ENCODE measurements at regions of chr3 and their contacts with region 1.

Region 1: DNA sequence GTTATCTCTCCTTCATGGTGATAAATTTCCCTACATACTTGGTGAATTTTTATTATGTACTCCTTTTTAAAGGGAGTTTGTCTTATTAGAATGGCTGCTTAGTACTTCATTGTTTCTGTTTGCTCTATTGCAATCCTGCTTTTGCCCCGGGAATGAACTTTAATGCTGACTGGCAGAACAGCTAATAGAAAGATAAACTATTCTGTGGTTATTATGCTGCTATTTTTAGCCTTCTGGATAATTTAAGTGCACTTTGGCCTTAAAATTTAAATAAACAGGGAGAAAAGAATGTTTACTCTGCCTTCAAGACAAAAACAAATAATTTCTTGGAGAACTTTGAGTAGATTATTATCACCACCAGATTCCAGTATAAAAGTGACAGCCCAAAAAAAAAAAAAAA is 413.8 kb upstream of the CCDC54 start:
- DNase-seq: no peak
- ATAC-seq: no peak
- H3K4me3 ChIP-seq: no peak overlapping the region
- H3K4me3 Mint-ChIP-seq: no peak overlapping the region
- H3K27ac ChIP-seq: no peak overlapping the region
- H3K27ac Mint-ChIP-seq: no peak overlapping the region
- H3K4me1 ChIP-seq: no peaks in the 10 kb centered on the region
- H3K4me1 Mint-ChIP-seq: no peaks in the 10 kb centered on the region
- H3K27me3 ChIP-seq: no peaks in the 10 kb centered on the region
- H3K27me3 Mint-ChIP-seq: peaks cover 0 to 5% (median 0%) of the 10 kb centered on the region in 5 donors

Region 2: DNA sequence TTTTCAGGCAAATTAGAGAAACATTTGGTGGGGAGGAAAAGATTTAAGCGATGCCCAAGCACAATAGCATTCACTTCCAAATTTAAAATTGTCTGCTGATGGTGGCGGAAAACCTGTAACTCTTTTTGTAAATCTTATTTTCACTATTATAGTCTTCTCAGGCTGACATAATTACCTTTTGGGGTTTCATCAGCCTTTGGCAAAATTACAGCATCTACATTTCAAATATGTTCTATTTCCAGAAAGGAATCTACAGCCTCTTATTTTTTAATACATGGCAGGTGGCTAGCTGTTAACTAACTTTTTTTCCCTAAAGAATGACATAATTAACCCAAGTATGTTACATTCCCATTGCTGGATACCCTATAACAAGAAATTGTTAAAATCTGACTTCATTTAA is 22.3 kb after region 1 on chr3:
- CTCF ChIA-PET with region 1: no interaction called
- POLR2A ChIA-PET with region 1: no interaction called
- intact Hi-C with region 1: loop called in 1 of 2 experiments (anchors 1 kb)
- DNase-seq: no peak
- ATAC-seq: no peak
- H3K4me3 ChIP-seq: no peak overlapping the region
- H3K4me3 Mint-ChIP-seq: no peak overlapping the region
- H3K27ac ChIP-seq: no peak overlapping the region
- H3K27ac Mint-ChIP-seq: no peak overlapping the region
- H3K4me1 ChIP-seq: no peaks in the 10 kb centered on the region
- H3K4me1 Mint-ChIP-seq: no peaks in the 10 kb centered on the region
- H3K27me3 ChIP-seq: no peaks in the 10 kb centered on the region
- H3K27me3 Mint-ChIP-seq: peaks cover 0 to 5% (median 0%) of the 10 kb centered on the region in 5 donors

Region 3: GRCh38 chr3:107206141-107206540 is 242.7 kb after region 1 on chr3:
- CTCF ChIA-PET with region 1: no interaction called
- POLR2A ChIA-PET with region 1: no interaction called
- intact Hi-C with region 1: no loop called
- DNase-seq: peak in 1 of 9 donors; percentile 2
- ATAC-seq: no peak
- H3K4me3 ChIP-seq: no peak overlapping the region
- H3K4me3 Mint-ChIP-seq: no peak overlapping the region
- H3K27ac ChIP-seq: no peak overlapping the region
- H3K27ac Mint-ChIP-seq: no peak overlapping the region
- H3K4me1 ChIP-seq: no peaks in the 10 kb centered on the region
- H3K4me1 Mint-ChIP-seq: no peaks in the 10 kb centered on the region
- H3K27me3 ChIP-seq: peaks cover 0 to 5% of the 10 kb centered on the region in 2 donors
- H3K27me3 Mint-ChIP-seq: peaks cover 3 to 23% (median 13%) of the 10 kb centered on the region in 5 donors

Region 4: DNA sequence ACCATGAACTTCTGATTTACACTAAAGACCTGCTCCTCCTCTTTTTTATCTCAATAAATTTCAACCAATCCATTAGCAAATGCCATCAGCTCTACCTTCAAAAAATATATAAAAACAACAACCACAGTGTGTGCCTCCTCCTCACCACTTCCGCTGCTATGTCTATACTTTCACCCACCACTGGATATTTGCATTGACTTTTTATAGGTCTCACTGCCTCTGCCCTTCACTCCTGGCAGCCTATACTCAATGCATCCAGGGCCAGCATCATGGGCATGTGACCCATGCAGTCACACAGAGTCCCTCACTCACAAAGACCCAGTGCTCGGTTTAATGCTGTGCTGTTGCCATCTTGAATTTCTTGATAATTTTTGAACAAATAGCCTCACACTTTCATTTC is 360.3 kb after region 1 on chr3:
- CTCF ChIA-PET with region 1: no interaction called
- POLR2A ChIA-PET with region 1: no interaction called
- intact Hi-C with region 1: no loop called
- DNase-seq: no peak
- ATAC-seq: no peak
- H3K4me3 ChIP-seq: no peak overlapping the region
- H3K4me3 Mint-ChIP-seq: no peak overlapping the region
- H3K27ac ChIP-seq: no peak overlapping the region
- H3K27ac Mint-ChIP-seq: no peak overlapping the region
- H3K4me1 ChIP-seq: no peaks in the 10 kb centered on the region
- H3K4me1 Mint-ChIP-seq: no peaks in the 10 kb centered on the region
- H3K27me3 ChIP-seq: no peaks in the 10 kb centered on the region
- H3K27me3 Mint-ChIP-seq: peaks cover 0 to 12% (median 0%) of the 10 kb centered on the region in 5 donors

Measured in naive thymus-derived CD4-positive, alpha-beta T cell (primary cell).